WTC11 (cell line): ENCODE measurements at regions of chr19 and their contacts with region 1.

Region 1: DNA sequence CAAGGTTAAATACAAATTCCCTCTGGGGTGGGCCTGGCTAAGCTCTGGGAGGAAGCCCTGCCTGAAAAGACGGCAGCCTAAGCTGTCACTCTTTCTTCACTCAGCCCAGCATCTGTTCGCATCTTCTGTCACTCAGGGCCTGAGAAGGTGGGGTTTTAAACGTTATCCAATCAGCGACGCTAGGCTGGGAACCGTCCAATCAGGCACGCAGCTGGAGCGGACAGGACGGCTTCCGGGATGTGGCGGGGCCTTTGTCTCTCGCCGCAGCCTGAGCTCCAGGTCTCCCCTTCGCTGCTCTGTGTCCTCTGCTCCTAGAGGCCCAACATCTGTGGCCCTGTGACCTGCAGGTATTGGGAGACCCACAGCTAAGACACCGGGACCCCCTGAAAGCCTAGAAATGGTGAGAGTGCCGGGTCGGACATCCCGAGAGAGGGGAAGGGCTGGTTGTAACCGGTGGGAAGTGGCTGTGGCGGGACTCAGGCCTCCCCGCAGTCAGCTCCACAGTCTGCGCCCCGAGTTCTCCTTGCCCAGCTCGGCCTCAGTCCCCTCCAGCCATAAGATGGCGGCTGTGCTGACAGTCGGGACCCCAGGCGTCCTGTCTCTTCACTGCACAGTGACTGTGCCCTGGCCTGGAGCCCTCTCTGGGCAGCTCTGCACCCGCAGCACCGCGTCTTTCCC is at the start of gene ZNF431:
- DNase-seq: peak; percentile 92
- ATAC-seq: peak; percentile 99
- H3K4me3 Mint-ChIP-seq: peak within 1 kb of the TSS; percentile 98
- H3K27ac Mint-ChIP-seq: peak within 1 kb of the TSS; percentile 99
- H3K4me1 Mint-ChIP-seq: peaks cover 5% of the 10 kb centered on the region
- H3K27me3 Mint-ChIP-seq: no peaks in the 10 kb centered on the region
- CTCF ChIP-seq: no peak
- total RNA-seq, gene ZNF431: 41.2 to 45.2 TPM (median 42.1 TPM) in 3 replicates

Region 2: GRCh38 chr19:21082011-21082975 is 59.6 kb before region 1 on chr19 and contains the start of gene ZNF714:
- CTCF ChIA-PET with region 1: no interaction called
- POLR2A ChIA-PET with region 1: interaction called, 14 read pairs
- DNase-seq: peak; percentile 92
- ATAC-seq: peak; percentile 98
- H3K4me3 Mint-ChIP-seq: peak within 1 kb of the TSS; percentile 100
- H3K27ac Mint-ChIP-seq: peak within 1 kb of the TSS; percentile 99
- H3K4me1 Mint-ChIP-seq: peaks cover 35% of the 10 kb centered on the region
- H3K27me3 Mint-ChIP-seq: no peaks in the 10 kb centered on the region
- CTCF ChIP-seq: no peak
- total RNA-seq, gene ZNF714: 50.0 to 60.4 TPM (median 50.8 TPM) in 3 replicates